ENCODE measurements at regions of chr4 and their contacts with region 1.

Region 1: DNA sequence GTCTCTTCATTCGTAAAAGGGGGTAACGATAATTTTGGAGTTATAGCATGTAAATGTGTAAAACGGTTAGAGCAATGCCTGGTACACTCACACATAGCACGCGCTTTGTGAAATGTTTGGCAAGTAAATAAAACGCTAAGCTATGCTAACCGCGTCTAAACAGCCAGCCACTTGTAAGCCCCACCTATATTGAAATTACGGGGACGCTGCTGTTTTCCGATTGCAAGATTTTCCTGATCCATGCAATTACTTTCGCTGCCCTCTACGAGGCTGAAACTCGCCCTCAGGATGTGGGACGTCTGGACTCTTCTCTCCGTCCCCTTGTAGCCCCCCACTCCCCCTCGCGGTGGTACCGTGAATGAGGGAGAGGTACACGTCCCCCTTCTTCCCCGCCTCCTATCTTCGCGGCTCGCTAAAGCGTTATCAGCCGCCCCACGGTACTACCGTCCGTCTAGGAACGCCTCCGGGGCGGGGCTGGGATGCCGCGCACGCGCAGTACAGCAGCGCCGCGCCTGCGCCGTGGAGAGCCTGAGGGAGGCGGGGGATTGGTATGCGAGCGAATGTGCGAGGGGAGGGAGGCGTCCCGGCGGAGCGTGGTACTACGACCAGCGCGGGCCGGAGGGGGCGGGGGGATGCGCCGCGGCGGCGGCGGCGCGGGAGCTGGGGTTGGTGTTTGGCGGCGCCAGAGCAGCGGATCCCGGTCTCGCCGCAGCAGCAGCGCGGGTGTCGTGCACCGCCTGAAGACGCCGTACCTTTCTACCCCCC is at the start of gene STIM2:
- DNase-seq: peak; percentile 98
- ATAC-seq: peak; percentile 68
- H3K4me3 Mint-ChIP-seq: peak within 1 kb of the TSS; percentile 91
- H3K27ac Mint-ChIP-seq: peak within 1 kb of the TSS; percentile 95
- H3K4me1 Mint-ChIP-seq: peaks cover 51% of the 10 kb centered on the region
- H3K27me3 Mint-ChIP-seq: no peaks in the 10 kb centered on the region
- total RNA-seq, gene STIM2: 32.9 to 36.4 TPM

Region 2: DNA sequence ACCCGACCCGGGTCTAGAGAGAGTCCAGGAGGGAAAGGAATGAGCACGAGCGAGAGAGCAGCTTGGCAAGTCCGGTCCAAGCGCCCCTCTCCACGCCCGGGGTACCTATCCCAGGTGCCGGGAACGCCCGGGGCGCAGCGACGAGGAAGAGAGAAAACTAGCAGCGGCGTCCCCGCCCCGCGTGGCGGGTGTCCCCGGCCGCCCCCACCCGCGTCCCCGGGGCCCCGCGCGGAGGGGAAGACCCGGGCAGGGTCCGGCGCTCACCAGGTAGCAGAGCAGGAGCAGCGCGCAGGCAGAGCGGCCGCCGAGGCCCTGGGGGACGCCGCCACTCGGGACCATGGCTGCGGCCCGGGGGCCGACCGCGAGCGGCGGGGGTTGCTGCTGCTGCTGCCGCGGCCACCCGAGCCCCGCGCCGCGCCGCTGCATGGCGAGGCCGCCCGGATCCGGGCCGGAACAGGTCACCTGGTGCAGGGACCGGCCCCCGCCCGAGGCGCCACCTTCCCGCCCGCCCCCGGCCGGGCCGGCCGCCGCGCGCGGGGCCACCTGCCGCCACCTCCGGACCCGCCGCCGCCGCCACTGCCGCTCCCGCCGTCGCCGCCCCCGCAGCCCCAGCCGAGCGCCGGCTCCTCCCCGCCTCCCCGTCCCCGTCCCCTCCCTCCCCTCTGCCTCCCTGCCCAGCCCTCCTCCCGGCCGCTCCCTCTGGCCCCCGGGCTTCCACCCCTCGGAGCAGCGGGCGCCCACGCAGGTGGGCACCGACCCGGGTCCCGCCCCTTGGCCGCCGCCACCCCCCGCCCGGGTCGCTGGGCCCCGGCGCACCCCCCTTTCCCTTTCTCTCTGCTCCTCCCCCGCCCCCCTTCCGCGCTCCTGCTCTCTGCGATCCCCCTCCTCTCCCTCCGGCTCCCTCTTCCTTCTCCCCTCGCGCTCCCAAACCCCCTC is 997.7 kb before region 1 on chr4 and contains the start of gene SEL1L3:
- CTCF ChIA-PET with region 1: no interaction called
- POLR2A ChIA-PET with region 1: no interaction called
- intact Hi-C with region 1: loop called in 1 of 2 experiments (anchors 2 kb)
- DNase-seq: peak; percentile 79
- ATAC-seq: peak; percentile 33
- H3K4me3 Mint-ChIP-seq: peak within 1 kb of the TSS; percentile 94
- H3K27ac Mint-ChIP-seq: peak within 1 kb of the TSS; percentile 96
- H3K4me1 Mint-ChIP-seq: peaks cover 40% of the 10 kb centered on the region
- H3K27me3 Mint-ChIP-seq: no peaks in the 10 kb centered on the region
- total RNA-seq, gene SEL1L3: 31.9 to 34.8 TPM

Region 3: DNA sequence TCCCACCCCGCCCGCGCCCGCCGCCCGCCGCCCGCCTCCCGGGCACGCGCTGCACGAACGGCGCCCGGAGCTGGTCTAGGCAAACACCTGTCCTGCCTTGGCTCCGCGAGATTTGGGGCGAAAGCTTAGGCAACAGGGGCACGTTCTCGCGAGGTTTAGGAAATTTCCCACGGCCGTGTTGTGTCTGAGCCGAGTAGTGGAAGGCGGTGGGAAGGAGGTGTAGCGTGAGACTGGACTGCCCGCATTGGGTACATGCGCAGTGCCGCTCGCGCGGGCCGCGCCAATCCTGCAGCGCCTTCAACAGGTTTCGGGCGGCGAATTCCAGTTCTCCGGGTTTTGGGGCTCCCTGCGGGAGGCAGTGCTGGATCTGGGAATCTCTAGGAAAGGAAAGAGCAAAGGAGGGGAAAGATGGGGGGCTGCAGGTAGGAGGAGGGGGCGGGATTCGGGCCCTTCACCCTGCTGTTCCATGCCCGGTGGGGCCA is 540.8 kb before region 1 on chr4:
- CTCF ChIA-PET with region 1: no interaction called
- POLR2A ChIA-PET with region 1: no interaction called
- intact Hi-C with region 1: loop called (anchors 1 to 10 kb)
- DNase-seq: peak; percentile 99
- ATAC-seq: peak; percentile 72
- H3K4me3 Mint-ChIP-seq: peak overlapping the region; percentile 99
- H3K27ac Mint-ChIP-seq: peak overlapping the region; percentile 97
- H3K4me1 Mint-ChIP-seq: peaks cover 37% of the 10 kb centered on the region
- H3K27me3 Mint-ChIP-seq: no peaks in the 10 kb centered on the region

Region 4: GRCh38 chr4:26557164-26557563 is 303.2 kb before region 1 on chr4:
- CTCF ChIA-PET with region 1: no interaction called
- POLR2A ChIA-PET with region 1: no interaction called
- intact Hi-C with region 1: no loop called
- DNase-seq: no peak
- ATAC-seq: no peak
- H3K4me3 Mint-ChIP-seq: no peak overlapping the region
- H3K27ac Mint-ChIP-seq: no peak overlapping the region
- H3K4me1 Mint-ChIP-seq: no peaks in the 10 kb centered on the region
- H3K27me3 Mint-ChIP-seq: peaks cover 22% of the 10 kb centered on the region

Region 5: GRCh38 chr4:26746802-26747213 is 113.5 kb before region 1 on chr4:
- CTCF ChIA-PET with region 1: no interaction called
- POLR2A ChIA-PET with region 1: interaction called, 5 read pairs
- intact Hi-C with region 1: loop called (anchors 1 to 5 kb)
- DNase-seq: peak; percentile 69
- ATAC-seq: peak; percentile 100
- H3K4me3 Mint-ChIP-seq: no peak overlapping the region
- H3K27ac Mint-ChIP-seq: no peak overlapping the region
- H3K4me1 Mint-ChIP-seq: peaks cover 14% of the 10 kb centered on the region
- H3K27me3 Mint-ChIP-seq: no peaks in the 10 kb centered on the region

Region 6: GRCh38 chr4:26878794-26879391 is 18.6 kb after region 1 on chr4:
- CTCF ChIA-PET with region 1: interaction called, 4 read pairs
- POLR2A ChIA-PET with region 1: interaction called, 10 read pairs
- intact Hi-C with region 1: loop called (anchors 1 to 2 kb)
- DNase-seq: peak; percentile 30
- ATAC-seq: peak; percentile 82
- H3K4me3 Mint-ChIP-seq: peak overlapping the region; percentile 13
- H3K27ac Mint-ChIP-seq: peak overlapping the region; percentile 85
- H3K4me1 Mint-ChIP-seq: peaks cover 75% of the 10 kb centered on the region
- H3K27me3 Mint-ChIP-seq: no peaks in the 10 kb centered on the region

Region 7: DNA sequence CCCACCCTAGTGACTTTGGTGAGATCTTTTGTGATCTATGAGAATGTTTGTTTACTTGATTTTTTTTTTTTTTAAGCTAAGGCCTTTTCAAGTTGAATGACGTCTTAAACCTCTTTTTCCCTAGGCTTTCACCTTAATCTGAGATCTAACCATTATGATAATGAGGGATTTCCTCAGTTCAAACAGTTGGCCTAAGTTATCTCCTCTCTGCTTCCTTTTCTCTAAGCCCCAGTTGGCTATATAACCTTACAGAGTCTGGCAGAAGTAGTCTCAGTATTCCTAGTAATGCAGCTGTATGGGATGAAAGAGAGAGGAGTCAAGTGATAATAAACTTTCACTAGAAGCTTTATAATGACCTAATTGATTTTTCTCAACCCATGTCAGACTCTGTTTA is 99.3 kb after region 1 on chr4:
- CTCF ChIA-PET with region 1: no interaction called
- POLR2A ChIA-PET with region 1: no interaction called
- intact Hi-C with region 1: no loop called
- DNase-seq: no peak
- ATAC-seq: peak; percentile 26
- H3K4me3 Mint-ChIP-seq: no peak overlapping the region
- H3K27ac Mint-ChIP-seq: peak overlapping the region; percentile 35
- H3K4me1 Mint-ChIP-seq: peaks cover 50% of the 10 kb centered on the region
- H3K27me3 Mint-ChIP-seq: no peaks in the 10 kb centered on the region

Region 8: DNA sequence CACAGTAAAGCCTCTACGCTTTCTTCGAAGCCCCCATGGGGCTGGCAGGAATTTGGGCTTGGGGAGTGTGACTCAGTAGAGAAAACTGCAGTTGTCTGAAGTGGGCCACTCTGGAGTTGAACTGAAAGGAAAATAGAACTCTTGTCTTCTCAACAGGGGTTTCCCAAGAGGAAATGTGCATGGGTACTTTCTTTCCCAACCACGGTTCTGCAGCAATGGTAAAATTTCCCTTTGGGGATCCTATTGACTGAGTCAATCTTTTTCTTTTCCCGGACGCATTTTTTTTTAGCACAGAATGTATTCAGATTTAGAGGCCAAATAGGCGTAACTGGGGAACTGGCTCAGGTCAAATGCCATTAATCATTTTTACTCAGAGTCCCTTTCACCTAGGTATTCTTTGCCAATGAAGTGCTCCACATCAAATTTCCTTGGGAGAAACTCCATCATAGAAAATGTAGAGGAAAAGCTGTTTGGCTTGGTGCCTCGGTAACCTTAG is 269.6 kb after region 1 on chr4:
- CTCF ChIA-PET with region 1: no interaction called
- POLR2A ChIA-PET with region 1: no interaction called
- intact Hi-C with region 1: no loop called
- DNase-seq: no peak
- ATAC-seq: no peak
- H3K4me3 Mint-ChIP-seq: no peak overlapping the region
- H3K27ac Mint-ChIP-seq: no peak overlapping the region
- H3K4me1 Mint-ChIP-seq: no peaks in the 10 kb centered on the region
- H3K27me3 Mint-ChIP-seq: peaks cover 5% of the 10 kb centered on the region